Prostate gland (tissue), 2 donors: ENCODE measurements at regions of chr1 and their contacts with region 1.

Region 1: GRCh38 chr1:205255941-205256780 is 28.4 kb downstream of the TMCC2 start:
- DNase-seq: peak; percentile 89
- H3K4me3 ChIP-seq: no peak overlapping the region
- H3K27ac ChIP-seq: no peak overlapping the region
- H3K4me1 ChIP-seq: no peaks in the 10 kb centered on the region
- H3K27me3 ChIP-seq: no peaks in the 10 kb centered on the region
- CTCF ChIP-seq: peak; percentile 86 to 98 (median 94)
- POLR2A ChIP-seq: no peak

Region 2: DNA sequence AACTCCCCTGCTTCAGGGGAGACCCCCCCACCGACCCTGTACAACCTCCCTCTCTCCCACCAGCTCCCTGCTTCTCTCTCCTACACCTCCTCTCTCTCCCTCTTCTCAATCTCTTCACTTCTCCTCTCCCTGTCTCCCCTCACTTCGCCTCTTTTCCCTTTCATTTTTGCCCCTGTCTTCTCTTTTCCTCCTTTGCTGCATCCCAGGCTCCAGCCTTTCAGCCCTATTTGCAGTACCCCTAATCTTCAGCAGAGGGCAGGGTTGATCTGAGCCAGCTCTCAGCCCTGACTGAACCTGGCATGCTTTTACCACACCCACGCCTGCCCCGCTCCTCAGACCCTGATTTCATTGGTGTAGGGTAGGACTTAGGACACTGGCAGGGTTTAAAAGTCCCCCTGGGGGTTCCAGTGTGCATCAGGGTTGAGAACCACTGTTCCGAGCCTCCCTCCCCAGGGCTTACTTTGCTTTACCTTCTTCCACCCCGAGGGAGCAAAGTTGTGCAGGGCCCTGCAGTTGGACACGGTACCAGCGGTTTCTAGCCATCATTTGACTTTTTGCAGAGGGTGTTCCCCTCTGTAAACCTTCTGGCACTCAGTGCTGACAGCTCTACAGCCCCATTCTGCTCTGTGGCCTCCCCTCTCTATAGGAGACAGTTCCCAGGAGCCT is 280.5 kb before region 1 on chr1:
- intact Hi-C with region 1: loop called (anchors 5 kb)
- DNase-seq: peak; percentile 29
- H3K4me3 ChIP-seq: no peak overlapping the region
- H3K27ac ChIP-seq: no peak overlapping the region
- H3K4me1 ChIP-seq: no peaks in the 10 kb centered on the region
- H3K27me3 ChIP-seq: no peaks in the 10 kb centered on the region
- CTCF ChIP-seq: peak; percentile 43 to 79 (median 58)
- POLR2A ChIP-seq: no peak

Region 3: GRCh38 chr1:205121660-205122488 is 134.3 kb before region 1 on chr1 and contains the start of gene RBBP5:
- intact Hi-C with region 1: loop called (anchors 5 kb)
- DNase-seq: peak; percentile 92
- H3K4me3 ChIP-seq: peak within 1 kb of the TSS; percentile 71 to 87
- H3K27ac ChIP-seq: peak within 1 kb of the TSS; percentile 92 to 93
- H3K4me1 ChIP-seq: peaks cover 7% of the 10 kb centered on the region
- H3K27me3 ChIP-seq: no peaks in the 10 kb centered on the region
- CTCF ChIP-seq: peak; percentile 33 to 73 (median 62)
- POLR2A ChIP-seq: peak; percentile 26
- total RNA-seq, gene RBBP5: 15.0 to 15.1 TPM

Region 4: GRCh38 chr1:205141236-205142101 is 114.7 kb before region 1 on chr1:
- intact Hi-C with region 1: loop called (anchors 5 kb)
- DNase-seq: peak; percentile 62
- H3K4me3 ChIP-seq: no peak overlapping the region
- H3K27ac ChIP-seq: no peak overlapping the region
- H3K4me1 ChIP-seq: no peaks in the 10 kb centered on the region
- H3K27me3 ChIP-seq: no peaks in the 10 kb centered on the region
- CTCF ChIP-seq: peak in 3 of 4 experiments; percentile 68 to 72 (median 71)
- POLR2A ChIP-seq: no peak

Region 5: GRCh38 chr1:205227584-205228006 is 28.6 kb before region 1 on chr1 and contains the start of gene TMCC2:
- intact Hi-C with region 1: loop called (anchors 2 kb)
- DNase-seq: peak; percentile 71
- H3K4me3 ChIP-seq: peak within 1 kb of the TSS; percentile 40 to 44
- H3K27ac ChIP-seq: no peak within 1 kb of the TSS
- H3K4me1 ChIP-seq: no peaks in the 10 kb centered on the region
- H3K27me3 ChIP-seq: no peaks in the 10 kb centered on the region
- CTCF ChIP-seq: no peak
- POLR2A ChIP-seq: peak; percentile 17
- total RNA-seq, gene TMCC2: 1.5 to 10.6 TPM